ENCODE measurements at regions of chr22 and their contacts with region 1.

Region 1: GRCh38 chr22:50148991-50149721 is 21.4 kb upstream of the PANX2 start:
- DNase-seq: peak; percentile 67
- ATAC-seq: peak; percentile 98
- H3K4me3 Mint-ChIP-seq: no peak overlapping the region
- H3K27ac Mint-ChIP-seq: no peak overlapping the region
- H3K4me1 Mint-ChIP-seq: peaks cover 4% of the 10 kb centered on the region
- H3K27me3 Mint-ChIP-seq: no peaks in the 10 kb centered on the region
- CTCF ChIP-seq: peak; percentile 66

Region 2: GRCh38 chr22:49767355-49768062 is 381.6 kb before region 1 on chr22:
- CTCF ChIA-PET with region 1: interaction called, 4 read pairs
- POLR2A ChIA-PET with region 1: no interaction called
- intact Hi-C with region 1: loop called (anchors 1 kb)
- DNase-seq: peak; percentile 15
- ATAC-seq: peak; percentile 68
- H3K4me3 Mint-ChIP-seq: no peak overlapping the region
- H3K27ac Mint-ChIP-seq: no peak overlapping the region
- H3K4me1 Mint-ChIP-seq: peaks cover 9% of the 10 kb centered on the region
- H3K27me3 Mint-ChIP-seq: no peaks in the 10 kb centered on the region
- CTCF ChIP-seq: no peak

Region 3: DNA sequence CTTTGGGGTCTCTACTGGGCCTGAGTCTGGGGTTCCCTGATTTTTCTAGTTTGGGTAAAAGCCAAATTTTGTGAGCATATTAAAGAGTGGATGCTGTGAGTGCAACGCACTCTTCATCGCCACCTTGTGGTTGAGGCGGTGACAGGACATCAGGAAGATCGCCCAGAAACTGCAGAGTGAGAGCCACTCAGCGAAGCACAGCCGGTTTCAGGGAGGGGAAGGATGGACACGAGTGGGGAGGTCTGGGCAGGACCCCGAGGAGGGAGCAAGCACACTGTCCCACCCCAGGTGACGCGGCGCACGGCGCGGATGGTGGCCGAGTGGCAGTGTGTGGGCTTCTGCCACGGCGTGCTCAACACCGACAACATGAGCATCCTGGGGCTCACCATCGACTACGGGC is 60.7 kb after region 1 on chr22:
- CTCF ChIA-PET with region 1: interaction called, 39 read pairs
- POLR2A ChIA-PET with region 1: interaction called, 10 read pairs
- intact Hi-C with region 1: loop called (anchors 1 kb)
- DNase-seq: peak; percentile 60
- ATAC-seq: peak; percentile 54
- H3K4me3 Mint-ChIP-seq: no peak overlapping the region
- H3K27ac Mint-ChIP-seq: peak overlapping the region; percentile 35
- H3K4me1 Mint-ChIP-seq: peaks cover 27% of the 10 kb centered on the region
- H3K27me3 Mint-ChIP-seq: no peaks in the 10 kb centered on the region
- CTCF ChIP-seq: no peak

Region 4: DNA sequence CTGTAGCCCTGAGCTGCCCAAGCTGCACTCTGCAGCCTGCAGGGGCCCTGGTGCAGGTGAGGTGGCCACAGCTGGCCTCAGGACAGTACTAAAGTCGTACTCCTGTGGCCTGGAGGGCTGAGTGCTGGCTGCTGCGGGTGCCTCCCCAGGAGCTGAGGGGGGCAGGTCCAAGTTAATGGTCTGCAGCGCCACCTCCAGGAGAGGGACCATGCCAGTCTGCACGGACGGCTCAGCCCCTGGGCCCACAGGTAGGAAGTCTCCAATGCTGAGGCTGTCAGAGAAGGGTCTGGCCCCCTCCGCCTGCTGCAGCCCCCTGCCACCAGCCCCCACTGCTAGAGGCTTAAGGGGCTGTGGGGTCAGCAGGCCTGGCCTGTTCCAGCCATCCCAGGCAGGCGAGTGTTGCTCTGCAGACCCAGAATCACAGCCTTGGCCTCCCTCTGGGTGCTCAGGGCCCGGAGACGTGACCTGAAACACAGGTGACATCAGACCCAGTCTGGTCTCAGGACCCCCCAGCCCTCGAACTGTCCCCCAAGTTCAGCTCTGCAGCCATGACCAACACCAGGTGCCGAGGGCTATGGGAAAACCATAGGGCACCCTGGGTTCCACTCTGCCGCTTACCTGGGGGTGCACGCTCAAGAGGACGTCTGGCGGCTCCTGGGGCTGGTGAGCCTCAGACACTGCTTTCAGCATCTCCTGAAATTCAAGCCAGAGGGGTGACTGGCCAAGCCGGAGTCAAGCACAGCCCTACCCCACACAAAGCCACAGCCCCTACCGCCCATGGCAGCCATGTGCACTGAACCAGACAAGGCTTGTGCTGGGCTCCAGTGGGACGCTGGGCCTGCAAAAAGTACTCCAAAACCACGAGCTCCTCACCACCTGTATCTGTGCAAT is 72.5 kb after region 1 on chr22:
- CTCF ChIA-PET with region 1: interaction called, 15 read pairs
- POLR2A ChIA-PET with region 1: no interaction called
- intact Hi-C with region 1: no loop called
- DNase-seq: no peak
- ATAC-seq: no peak
- H3K4me3 Mint-ChIP-seq: no peak overlapping the region
- H3K27ac Mint-ChIP-seq: no peak overlapping the region
- H3K4me1 Mint-ChIP-seq: no peaks in the 10 kb centered on the region
- H3K27me3 Mint-ChIP-seq: no peaks in the 10 kb centered on the region
- CTCF ChIP-seq: no peak

Region 5: DNA sequence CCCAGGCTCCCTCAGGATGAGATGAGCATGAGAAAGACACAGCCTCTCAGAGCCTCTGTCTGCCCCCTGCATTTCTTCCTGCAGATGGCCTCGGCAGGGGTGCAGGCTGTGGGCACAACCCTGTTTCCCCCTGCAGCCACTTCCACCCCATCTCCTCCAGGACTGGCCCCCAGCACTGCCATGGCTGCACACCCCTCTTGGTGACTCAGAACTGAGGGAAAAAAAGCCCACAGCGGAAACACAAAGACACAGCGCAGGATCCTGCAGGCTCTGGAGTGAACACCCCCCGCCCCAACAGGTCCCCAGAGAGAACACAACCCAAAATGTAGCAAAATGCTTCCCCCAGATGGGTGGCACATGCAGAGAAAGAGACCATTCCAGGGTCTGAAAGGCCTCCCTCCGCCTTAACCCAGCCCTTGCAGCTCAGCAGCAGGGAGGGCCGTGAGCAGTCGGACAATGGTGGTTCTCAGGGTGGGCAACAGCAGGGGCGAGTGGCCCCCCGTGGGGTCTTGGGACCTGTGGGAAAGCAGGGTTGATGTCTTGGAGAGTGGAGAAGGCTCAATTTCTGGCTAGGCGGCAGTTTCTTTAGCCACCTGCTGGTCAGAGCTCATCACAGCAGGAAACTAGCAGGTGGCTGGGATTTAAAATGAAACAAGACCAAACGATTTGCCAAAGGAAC is 87.7 kb after region 1 on chr22:
- CTCF ChIA-PET with region 1: interaction called, 5 read pairs
- POLR2A ChIA-PET with region 1: no interaction called
- intact Hi-C with region 1: loop called (anchors 1 kb)
- DNase-seq: no peak
- ATAC-seq: no peak
- H3K4me3 Mint-ChIP-seq: no peak overlapping the region
- H3K27ac Mint-ChIP-seq: no peak overlapping the region
- H3K4me1 Mint-ChIP-seq: peaks cover 13% of the 10 kb centered on the region
- H3K27me3 Mint-ChIP-seq: no peaks in the 10 kb centered on the region
- CTCF ChIP-seq: no peak